Activated naive CD4-positive, alpha-beta T cell treated with anti-CD3 and anti-CD28 coated beads for 36 hours (primary cell): ENCODE measurements at regions of chr17 and their contacts with region 1.

Region 1: GRCh38 chr17:45172454-45173286 is 11.0 kb downstream of the HEXIM2 start:
- DNase-seq: peak; percentile 65
- H3K4me3 Mint-ChIP-seq: peak overlapping the region; percentile 71
- H3K27ac Mint-ChIP-seq: peak overlapping the region; percentile 93
- H3K4me1 Mint-ChIP-seq: peaks cover 21% of the 10 kb centered on the region
- H3K27me3 Mint-ChIP-seq: no peaks in the 10 kb centered on the region

Region 2: GRCh38 chr17:45155029-45155428 is 17.6 kb before region 1 on chr17:
- CTCF ChIA-PET with region 1: interaction called, 23 read pairs
- intact Hi-C with region 1: no loop called
- DNase-seq: no peak
- H3K4me3 Mint-ChIP-seq: no peak overlapping the region
- H3K27ac Mint-ChIP-seq: peak overlapping the region; percentile 54
- H3K4me1 Mint-ChIP-seq: peaks cover 48% of the 10 kb centered on the region
- H3K27me3 Mint-ChIP-seq: no peaks in the 10 kb centered on the region

Region 3: GRCh38 chr17:45161019-45161825 is 11.4 kb before region 1 on chr17:
- CTCF ChIA-PET with region 1: interaction called, 10 read pairs
- intact Hi-C with region 1: loop called (anchors 1 kb)
- DNase-seq: peak; percentile 99
- H3K4me3 Mint-ChIP-seq: peak overlapping the region; percentile 96
- H3K27ac Mint-ChIP-seq: peak overlapping the region; percentile 96
- H3K4me1 Mint-ChIP-seq: peaks cover 33% of the 10 kb centered on the region
- H3K27me3 Mint-ChIP-seq: no peaks in the 10 kb centered on the region